ENCODE measurements at regions of chr7 and their contacts with region 1.

Region 1: DNA sequence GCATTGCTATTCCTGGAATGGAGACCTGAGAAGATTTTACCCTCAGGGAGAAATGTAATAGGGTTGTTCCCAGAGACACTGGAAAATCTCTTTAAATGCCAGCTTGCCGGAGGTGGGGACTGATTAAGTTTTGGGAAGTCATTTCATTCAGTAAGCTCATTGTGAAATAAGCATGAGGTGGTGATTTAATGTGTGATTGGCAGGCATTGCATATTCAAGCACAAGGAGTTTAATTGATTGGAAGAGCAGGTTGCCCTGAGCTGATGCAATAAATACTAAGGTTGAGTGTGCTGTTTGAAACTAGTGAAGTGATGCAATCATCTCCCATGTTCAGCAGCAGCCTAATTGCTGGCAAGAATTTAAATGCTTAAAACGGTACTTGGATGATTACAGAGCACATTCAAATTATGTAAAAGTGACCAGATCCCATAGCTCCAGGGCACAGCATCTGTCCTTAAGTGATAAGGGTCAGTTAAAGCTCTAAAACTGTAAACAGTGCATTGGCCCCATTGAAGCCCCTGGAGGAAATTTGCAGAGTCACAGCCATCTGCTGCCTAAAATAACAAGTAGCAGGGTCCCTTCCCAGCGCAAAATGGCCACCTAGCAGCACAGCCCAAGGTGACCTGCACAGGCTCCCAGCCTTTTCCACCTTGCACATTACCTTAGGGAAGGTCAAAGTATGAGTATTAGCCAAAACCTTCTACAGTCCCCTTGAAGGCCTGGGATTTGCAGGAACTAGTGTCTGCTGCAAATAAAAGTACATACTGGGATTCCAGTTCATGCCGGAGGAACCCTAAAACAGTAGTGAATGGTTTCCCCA is 92.1 kb downstream of the CCDC71L start:
- DNase-seq: peak; percentile 94 to 100 (median 95)
- ATAC-seq: peak; percentile 88
- H3K4me3 ChIP-seq: no peak overlapping the region
- H3K27ac ChIP-seq: peak overlapping the region; percentile 99
- H3K4me1 ChIP-seq: peaks cover 39 to 75% of the 10 kb centered on the region in 2 experiments
- H3K27me3 ChIP-seq: no peaks in the 10 kb centered on the region
- CTCF ChIP-seq: peak; percentile 40 to 51 (median 48); a peak in 5 of 6 replicates
- EP300 ChIP-seq: peak; percentile 100
- POLR2A ChIP-seq: peak; percentile 53; the same call in 1 of the 2 replicates
- RAD21 ChIP-seq: peak; percentile 69 to 72

Region 2: GRCh38 chr7:106542550-106543220 is 26.2 kb before region 1 on chr7:
- CTCF ChIA-PET with region 1: interaction called, 3 read pairs
- POLR2A ChIA-PET with region 1: interaction called, 10 read pairs
- in situ Hi-C with region 1: no loop called
- intact Hi-C with region 1: loop called (anchors 1 kb)
- DNase-seq: peak; percentile 77 to 96 (median 84)
- ATAC-seq: peak; percentile 96
- H3K4me3 ChIP-seq: no peak overlapping the region
- H3K27ac ChIP-seq: peak overlapping the region; percentile 30
- H3K4me1 ChIP-seq: peaks cover 0 to 22% of the 10 kb centered on the region in 2 experiments; a peak in 2 of 5 replicates
- H3K27me3 ChIP-seq: no peaks in the 10 kb centered on the region
- CTCF ChIP-seq: peak; percentile 95 to 98 (median 98)
- EP300 ChIP-seq: peak; percentile 63
- POLR2A ChIP-seq: no peak
- RAD21 ChIP-seq: peak; percentile 100

Region 3: DNA sequence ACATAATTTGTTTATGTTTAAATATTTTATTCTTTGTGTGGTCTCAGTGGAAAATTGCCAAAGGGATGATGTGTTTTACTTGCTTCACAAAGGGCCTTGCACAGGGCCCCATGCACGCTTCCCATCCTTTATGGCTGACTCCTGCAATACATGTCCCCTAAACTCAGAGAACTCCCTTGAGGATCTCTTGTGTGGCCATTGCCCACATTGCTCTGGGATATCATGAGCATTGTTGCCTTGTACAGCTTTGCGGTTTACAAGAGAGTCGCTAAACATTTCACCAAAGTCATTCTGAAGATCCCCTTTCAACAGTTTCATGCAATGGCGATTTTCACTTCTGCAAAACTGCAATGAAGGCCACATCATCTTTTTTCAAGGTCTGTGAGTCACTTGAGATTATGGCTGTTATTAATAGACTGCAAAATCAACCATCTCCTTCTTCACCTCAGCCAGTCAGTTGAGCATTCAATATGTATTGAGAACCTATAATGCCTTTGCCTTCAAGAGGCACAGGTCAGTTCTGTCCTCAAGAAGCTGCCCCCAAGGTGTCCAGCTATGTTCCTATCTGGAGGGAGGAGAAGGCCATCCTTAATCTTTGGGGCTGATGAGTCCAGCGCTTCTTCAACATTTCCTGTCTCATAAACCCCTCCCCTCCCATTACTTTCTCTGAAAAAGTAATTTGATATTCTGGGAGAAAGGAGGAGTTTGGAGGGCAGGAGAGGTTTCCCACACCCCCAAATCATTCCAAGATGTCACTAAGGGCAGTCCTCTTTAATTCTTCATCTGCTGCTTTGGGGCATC is 16.0 kb before region 1 on chr7:
- CTCF ChIA-PET with region 1: no interaction called
- POLR2A ChIA-PET with region 1: interaction called, 11 read pairs
- in situ Hi-C with region 1: no loop called
- intact Hi-C with region 1: no loop called
- DNase-seq: peak in 2 of 4 experiments; percentile 43 to 54
- ATAC-seq: peak; percentile 75
- H3K4me3 ChIP-seq: no peak overlapping the region
- H3K27ac ChIP-seq: peak overlapping the region; percentile 35; the same call in 2 of the 3 replicates
- H3K4me1 ChIP-seq: peaks cover 3 to 30% of the 10 kb centered on the region in 2 experiments; a peak in 4 of 5 replicates
- H3K27me3 ChIP-seq: no peaks in the 10 kb centered on the region
- CTCF ChIP-seq: no peak; a peak in 1 of 6 replicates
- EP300 ChIP-seq: 0 out of 2 replicates have a peak, but pooled peaks have one; percentile 5
- POLR2A ChIP-seq: no peak
- RAD21 ChIP-seq: peak in 1 of 2 experiments; percentile 19; a peak in 2 of 4 replicates

Region 4: DNA sequence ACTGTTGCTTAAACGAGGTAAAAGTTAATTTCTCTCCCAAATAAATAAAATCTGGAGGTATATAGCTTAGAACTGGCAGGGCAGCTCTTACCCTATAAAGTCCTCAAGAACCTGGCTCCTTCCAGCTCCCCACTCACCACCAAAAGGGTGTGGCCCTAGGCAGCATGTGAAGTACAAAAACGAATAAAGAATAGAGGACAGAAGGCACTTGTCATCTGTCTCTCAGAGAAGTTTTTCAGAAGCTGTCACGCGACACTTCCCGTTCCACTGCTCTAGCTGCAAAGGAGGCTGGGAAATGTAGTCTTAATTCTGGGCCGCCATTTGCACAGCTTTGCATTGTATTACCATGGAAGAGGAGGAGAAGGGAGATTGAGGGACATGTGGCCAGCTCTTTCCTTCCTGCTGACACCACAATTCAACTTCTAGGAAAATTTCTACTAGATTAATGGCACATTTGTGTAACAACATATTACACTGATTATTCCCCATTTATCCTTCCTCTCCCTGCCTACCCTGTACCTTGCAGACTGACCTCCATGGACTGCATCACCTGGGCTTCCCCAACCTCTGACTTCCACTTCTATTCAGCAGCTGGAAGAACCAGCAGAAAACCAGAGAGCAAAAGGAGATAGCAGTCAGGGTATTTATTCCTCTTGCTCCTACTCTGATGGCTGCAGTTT is 29.9 kb after region 1 on chr7:
- CTCF ChIA-PET with region 1: interaction called, 3 read pairs
- POLR2A ChIA-PET with region 1: interaction called, 8 read pairs
- in situ Hi-C with region 1: no loop called
- intact Hi-C with region 1: loop called (anchors 2 kb)
- DNase-seq: peak; percentile 83 to 97 (median 87)
- ATAC-seq: peak; percentile 97
- H3K4me3 ChIP-seq: no peak overlapping the region
- H3K27ac ChIP-seq: peak overlapping the region; percentile 62
- H3K4me1 ChIP-seq: peaks cover 19 to 56% of the 10 kb centered on the region in 2 experiments
- H3K27me3 ChIP-seq: no peaks in the 10 kb centered on the region
- CTCF ChIP-seq: no peak
- EP300 ChIP-seq: peak; percentile 55; the same call in 1 of the 2 replicates
- POLR2A ChIP-seq: no peak
- RAD21 ChIP-seq: no peak

Region 5: DNA sequence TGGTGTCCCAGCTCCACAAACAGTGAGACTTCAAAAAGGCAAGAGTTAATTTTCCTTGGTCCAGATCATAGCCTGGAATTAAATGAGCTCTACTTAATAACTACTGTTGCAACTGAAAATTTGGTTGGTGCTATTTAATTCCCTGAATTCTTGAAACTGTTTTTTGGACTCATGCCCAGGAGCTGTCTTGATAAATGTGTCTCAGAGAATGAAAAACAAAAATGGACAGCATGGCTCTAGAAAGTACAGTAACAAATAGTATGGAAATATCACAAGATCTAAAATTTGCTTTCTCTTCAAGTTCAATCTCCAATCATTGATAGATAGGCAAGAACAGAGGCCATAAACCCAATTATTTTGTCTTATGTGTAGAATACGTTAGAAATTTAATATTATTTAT is 49.6 kb after region 1 on chr7:
- CTCF ChIA-PET with region 1: no interaction called
- POLR2A ChIA-PET with region 1: interaction called, 3 read pairs
- in situ Hi-C with region 1: no loop called
- intact Hi-C with region 1: loop called (anchors 5 kb)
- DNase-seq: peak in 1 of 4 experiments; percentile 74
- ATAC-seq: peak; percentile 52
- H3K4me3 ChIP-seq: no peak overlapping the region
- H3K27ac ChIP-seq: peak overlapping the region; percentile 21; the same call in 1 of the 3 replicates
- H3K4me1 ChIP-seq: peaks cover 14 to 37% of the 10 kb centered on the region in 2 experiments
- H3K27me3 ChIP-seq: no peaks in the 10 kb centered on the region
- CTCF ChIP-seq: no peak
- EP300 ChIP-seq: no peak
- POLR2A ChIP-seq: no peak
- RAD21 ChIP-seq: no peak

Region 6: DNA sequence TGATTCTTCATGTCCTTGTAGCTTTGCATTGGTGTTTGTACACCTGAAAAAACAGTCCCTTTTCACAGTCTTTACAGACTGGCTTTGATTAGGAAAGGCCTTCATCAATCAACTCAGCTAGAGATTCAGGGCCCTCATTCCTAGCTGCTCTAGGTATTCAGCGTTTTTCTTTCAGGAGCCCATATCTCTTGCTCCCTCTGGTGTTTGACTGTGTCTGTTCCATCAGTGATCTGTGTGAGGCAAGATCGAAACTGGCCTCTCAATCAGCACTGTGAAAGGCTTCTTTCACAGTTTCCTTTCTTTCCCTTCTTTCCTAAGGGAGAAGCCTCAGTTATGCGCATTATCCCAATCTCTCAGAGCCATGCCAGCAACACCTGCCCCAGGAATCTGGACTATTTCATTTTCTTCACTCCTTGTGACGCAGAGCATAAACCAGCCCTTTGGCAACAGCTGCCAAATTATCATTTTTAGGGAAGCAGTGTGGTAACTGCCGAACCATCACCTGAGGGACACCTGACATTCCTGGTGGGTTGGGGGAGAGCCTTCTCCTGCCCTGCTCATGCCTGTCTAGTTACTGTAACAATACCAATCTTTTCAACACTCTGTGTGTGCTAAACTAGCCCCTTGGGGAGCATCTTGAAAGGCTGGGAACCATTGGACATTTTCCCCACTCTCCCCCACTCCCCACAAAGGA is 167.8 kb after region 1 on chr7:
- CTCF ChIA-PET with region 1: no interaction called
- POLR2A ChIA-PET with region 1: interaction called, 3 read pairs
- in situ Hi-C with region 1: no loop called
- intact Hi-C with region 1: loop called (anchors 1 kb)
- DNase-seq: peak; percentile 43 to 80 (median 64)
- ATAC-seq: peak; percentile 94
- H3K4me3 ChIP-seq: no peak overlapping the region
- H3K27ac ChIP-seq: peak overlapping the region; percentile 18; the same call in 1 of the 3 replicates
- H3K4me1 ChIP-seq: peaks cover 0 to 16% of the 10 kb centered on the region in 2 experiments; a peak in 2 of 5 replicates
- H3K27me3 ChIP-seq: no peaks in the 10 kb centered on the region
- CTCF ChIP-seq: peak; percentile 83 to 92 (median 90)
- EP300 ChIP-seq: peak; percentile 57; the same call in 1 of the 2 replicates
- POLR2A ChIP-seq: no peak
- RAD21 ChIP-seq: peak; percentile 97 to 99

Region 7: GRCh38 chr7:107014387-107015023 is 445.6 kb after region 1 on chr7:
- CTCF ChIA-PET with region 1: no interaction called
- POLR2A ChIA-PET with region 1: no interaction called
- in situ Hi-C with region 1: no loop called
- intact Hi-C with region 1: loop called (anchors 10 kb)
- DNase-seq: no peak
- ATAC-seq: no peak
- H3K4me3 ChIP-seq: no peak overlapping the region
- H3K27ac ChIP-seq: peak overlapping the region; percentile 6; the same call in 1 of the 3 replicates
- H3K4me1 ChIP-seq: peaks cover 27 to 61% of the 10 kb centered on the region in 2 experiments
- H3K27me3 ChIP-seq: no peaks in the 10 kb centered on the region
- CTCF ChIP-seq: no peak
- EP300 ChIP-seq: no peak
- POLR2A ChIP-seq: no peak
- RAD21 ChIP-seq: no peak

Measured in K562 (cell line).